WTC11 (cell line): ENCODE measurements at regions of chr1 and their contacts with region 1.

Region 1: GRCh38 chr1:16009030-16009709 is 5.1 kb downstream of the SRARP start:
- DNase-seq: peak; percentile 97
- ATAC-seq: peak; percentile 53
- H3K4me3 Mint-ChIP-seq: no peak overlapping the region
- H3K27ac Mint-ChIP-seq: no peak overlapping the region
- H3K4me1 Mint-ChIP-seq: peaks cover 24% of the 10 kb centered on the region
- H3K27me3 Mint-ChIP-seq: no peaks in the 10 kb centered on the region
- CTCF ChIP-seq: peak; percentile 98

Region 2: GRCh38 chr1:16026723-16027484 is 17.7 kb after region 1 on chr1:
- CTCF ChIA-PET with region 1: interaction called, 24 read pairs
- POLR2A ChIA-PET with region 1: interaction called, 4 read pairs
- DNase-seq: peak; percentile 98
- ATAC-seq: peak; percentile 96
- H3K4me3 Mint-ChIP-seq: peak overlapping the region; percentile 66
- H3K27ac Mint-ChIP-seq: no peak overlapping the region
- H3K4me1 Mint-ChIP-seq: peaks cover 16% of the 10 kb centered on the region
- H3K27me3 Mint-ChIP-seq: peaks cover 41% of the 10 kb centered on the region
- CTCF ChIP-seq: no peak

Region 3: GRCh38 chr1:16032388-16033103 is 23.4 kb after region 1 on chr1:
- CTCF ChIA-PET with region 1: interaction called, 24 read pairs
- POLR2A ChIA-PET with region 1: interaction called, 3 read pairs
- DNase-seq: peak; percentile 98
- ATAC-seq: peak; percentile 98
- H3K4me3 Mint-ChIP-seq: no peak overlapping the region
- H3K27ac Mint-ChIP-seq: no peak overlapping the region
- H3K4me1 Mint-ChIP-seq: peaks cover 19% of the 10 kb centered on the region
- H3K27me3 Mint-ChIP-seq: peaks cover 7% of the 10 kb centered on the region; the same call in 1 of the 2 replicates
- CTCF ChIP-seq: peak; percentile 97

Region 4: DNA sequence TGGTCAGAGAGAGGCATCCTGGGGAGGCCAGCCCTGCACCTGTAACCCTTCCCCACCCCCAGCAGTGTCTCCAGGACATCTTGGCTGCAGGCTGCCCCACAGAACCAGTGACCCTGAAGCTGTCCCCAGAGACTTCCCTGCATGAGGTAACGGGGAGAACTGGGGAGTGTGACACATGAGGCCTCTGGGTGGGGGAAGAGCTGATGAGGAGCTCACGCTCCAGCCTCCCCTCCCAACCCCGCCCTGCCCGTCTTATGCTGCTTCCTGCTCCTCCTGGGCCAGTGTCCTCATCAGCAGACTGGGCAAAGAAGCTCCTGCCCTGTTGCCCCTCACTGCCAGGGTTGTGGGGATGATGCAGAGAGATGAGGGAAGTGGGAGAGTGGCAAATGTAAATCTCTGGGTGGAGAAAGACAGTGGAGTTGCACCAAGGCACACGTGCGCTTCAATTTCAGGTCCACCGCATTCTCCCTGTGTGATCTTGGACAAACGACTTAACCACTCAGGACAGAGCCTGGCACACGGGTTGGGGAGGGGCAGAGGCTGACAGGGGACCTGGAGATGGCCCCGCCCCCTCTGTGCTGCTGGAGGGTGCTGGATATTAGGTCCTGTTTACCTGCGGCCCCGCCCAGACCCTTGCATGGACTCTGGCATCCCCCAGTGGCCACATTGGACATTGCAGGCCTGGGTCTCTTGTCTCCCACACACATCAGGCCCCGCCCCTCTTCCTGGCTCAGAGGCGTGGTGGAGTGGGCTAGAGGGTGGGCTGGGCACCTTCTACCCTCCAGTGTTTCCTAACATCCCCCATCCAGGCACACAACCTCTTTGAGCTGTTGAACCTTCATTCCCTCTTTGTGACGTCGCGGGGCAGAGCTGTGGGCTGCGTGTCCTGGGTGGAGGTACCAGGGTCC is 46.7 kb after region 1 on chr1:
- CTCF ChIA-PET with region 1: interaction called, 11 read pairs
- POLR2A ChIA-PET with region 1: no interaction called
- DNase-seq: peak; percentile 99
- ATAC-seq: peak; percentile 97
- H3K4me3 Mint-ChIP-seq: peak overlapping the region; percentile 24; the same call in 1 of the 2 replicates
- H3K27ac Mint-ChIP-seq: no peak overlapping the region
- H3K4me1 Mint-ChIP-seq: peaks cover 7% of the 10 kb centered on the region
- H3K27me3 Mint-ChIP-seq: no peaks in the 10 kb centered on the region; the same call in 1 of the 2 replicates
- CTCF ChIP-seq: peak; percentile 96

Region 5: GRCh38 chr1:16101623-16102022 is 92.5 kb after region 1 on chr1:
- CTCF ChIA-PET with region 1: no interaction called
- POLR2A ChIA-PET with region 1: no interaction called
- DNase-seq: no peak
- ATAC-seq: no peak
- H3K4me3 Mint-ChIP-seq: no peak overlapping the region
- H3K27ac Mint-ChIP-seq: no peak overlapping the region
- H3K4me1 Mint-ChIP-seq: peaks cover 6% of the 10 kb centered on the region
- H3K27me3 Mint-ChIP-seq: peaks cover 22% of the 10 kb centered on the region
- CTCF ChIP-seq: no peak